Testis (tissue), 5 donors: ENCODE measurements at regions of chr12 and their contacts with region 1.

Region 1: GRCh38 chr12:32444895-32445294 is 45.5 kb downstream of the FGD4 start:
- DNase-seq: no peak
- H3K4me3 ChIP-seq: no peak overlapping the region
- H3K27ac ChIP-seq: no peak overlapping the region
- H3K4me1 ChIP-seq: peaks cover 8% of the 10 kb centered on the region
- H3K27me3 ChIP-seq: no peaks in the 10 kb centered on the region
- CTCF ChIP-seq: no peak
- POLR2A ChIP-seq: no peak

Region 2: DNA sequence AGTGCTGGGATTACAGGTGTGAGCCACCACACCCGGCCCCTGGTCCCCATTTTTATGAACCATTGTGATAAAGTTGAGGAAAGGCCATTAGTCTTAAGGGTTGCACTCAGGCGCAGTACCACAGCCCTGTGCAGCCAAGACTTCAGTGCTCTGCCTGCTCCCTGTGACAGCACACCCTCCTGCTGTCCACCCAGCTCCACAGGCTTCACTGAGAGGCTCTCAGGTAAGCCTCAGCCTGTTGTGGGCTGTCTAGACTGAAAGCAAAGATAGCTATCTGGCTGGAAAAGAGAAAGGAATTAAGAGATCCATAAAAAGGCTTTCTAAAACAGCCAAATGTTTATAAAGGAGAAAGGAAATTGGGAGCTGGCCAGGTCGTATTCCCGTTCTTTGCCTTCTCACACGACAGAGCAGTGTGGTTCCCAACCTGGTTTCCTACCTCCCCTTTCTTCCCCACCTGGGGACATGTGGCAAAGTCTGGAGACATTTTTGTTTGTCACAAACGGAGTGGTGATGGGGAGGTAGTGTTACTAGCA is 215.1 kb after region 1 on chr12:
- intact Hi-C with region 1: loop called (anchors 10 kb)
- DNase-seq: no peak
- H3K4me3 ChIP-seq: no peak overlapping the region
- H3K27ac ChIP-seq: no peak overlapping the region
- H3K4me1 ChIP-seq: no peaks in the 10 kb centered on the region
- H3K27me3 ChIP-seq: no peaks in the 10 kb centered on the region
- CTCF ChIP-seq: no peak
- POLR2A ChIP-seq: no peak